ENCODE measurements at regions of chr2 and their contacts with region 1.

Region 1: DNA sequence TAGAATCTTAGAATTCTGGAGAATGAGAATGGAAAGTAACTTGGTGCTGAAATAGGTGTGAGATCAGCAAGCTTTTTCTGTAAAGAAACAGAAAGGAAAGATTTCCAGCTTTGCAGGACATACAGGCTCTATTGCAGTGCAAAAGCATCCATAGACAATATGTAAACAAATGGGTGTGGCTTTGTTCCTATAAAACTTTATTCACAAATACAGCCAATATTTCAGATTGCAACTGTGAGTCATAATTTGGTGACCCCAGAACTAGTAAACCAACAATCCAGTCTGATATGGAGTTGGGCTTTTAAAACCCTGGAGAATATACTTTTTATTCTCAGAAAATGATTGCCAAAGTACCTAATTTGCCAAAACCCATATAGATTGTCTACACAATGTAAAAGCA is 305.7 kb downstream of the TRIB2 start:
- DNase-seq: no peak
- H3K4me3 ChIP-seq: no peak overlapping the region
- H3K27ac ChIP-seq: no peak overlapping the region
- H3K4me1 ChIP-seq: no peaks in the 10 kb centered on the region
- H3K27me3 ChIP-seq: peaks cover 0 to 2% of the 10 kb centered on the region in 2 donors
- CTCF ChIP-seq: no peak

Region 2: DNA sequence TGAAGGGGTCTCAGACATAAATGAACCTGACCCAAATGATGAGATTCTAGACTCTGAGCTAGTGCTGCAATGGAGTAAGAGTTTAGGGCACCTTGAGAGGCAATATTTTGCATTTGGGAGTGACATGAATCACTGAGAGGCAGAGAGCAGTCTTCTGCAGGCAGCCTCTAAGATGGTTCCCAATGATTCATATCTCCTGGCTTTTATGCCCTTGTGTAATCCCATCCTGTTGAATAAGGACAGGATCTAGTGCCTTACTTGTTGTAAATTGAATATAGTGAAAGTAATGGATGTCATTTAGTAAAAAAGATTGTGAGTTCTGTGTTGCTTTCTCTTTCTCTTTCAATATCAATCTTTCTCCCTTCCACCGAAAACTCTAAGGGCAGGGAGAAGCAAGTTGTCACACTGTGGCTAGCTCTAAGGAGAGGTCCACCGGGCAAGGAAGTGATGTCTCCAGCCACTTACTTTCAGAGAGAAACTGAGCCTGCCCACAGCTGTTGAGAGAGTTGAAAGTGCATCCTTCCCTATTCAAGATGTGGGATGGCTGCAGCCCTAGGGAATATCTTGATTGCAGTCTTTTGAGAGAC is 161.0 kb before region 1 on chr2:
- intact Hi-C with region 1: no loop called
- DNase-seq: no peak
- H3K4me3 ChIP-seq: no peak overlapping the region
- H3K27ac ChIP-seq: no peak overlapping the region
- H3K4me1 ChIP-seq: no peaks in the 10 kb centered on the region
- H3K27me3 ChIP-seq: no peaks in the 10 kb centered on the region
- CTCF ChIP-seq: no peak

Region 3: GRCh38 chr2:12990523-12990922 is 31.9 kb before region 1 on chr2:
- intact Hi-C with region 1: loop called (anchors 1 kb)
- DNase-seq: no peak
- H3K4me3 ChIP-seq: no peak overlapping the region
- H3K27ac ChIP-seq: no peak overlapping the region
- H3K4me1 ChIP-seq: no peaks in the 10 kb centered on the region
- H3K27me3 ChIP-seq: no peaks in the 10 kb centered on the region
- CTCF ChIP-seq: no peak